A673 (cell line): ENCODE measurements at regions of chr14 and their contacts with region 1.

Region 1: DNA sequence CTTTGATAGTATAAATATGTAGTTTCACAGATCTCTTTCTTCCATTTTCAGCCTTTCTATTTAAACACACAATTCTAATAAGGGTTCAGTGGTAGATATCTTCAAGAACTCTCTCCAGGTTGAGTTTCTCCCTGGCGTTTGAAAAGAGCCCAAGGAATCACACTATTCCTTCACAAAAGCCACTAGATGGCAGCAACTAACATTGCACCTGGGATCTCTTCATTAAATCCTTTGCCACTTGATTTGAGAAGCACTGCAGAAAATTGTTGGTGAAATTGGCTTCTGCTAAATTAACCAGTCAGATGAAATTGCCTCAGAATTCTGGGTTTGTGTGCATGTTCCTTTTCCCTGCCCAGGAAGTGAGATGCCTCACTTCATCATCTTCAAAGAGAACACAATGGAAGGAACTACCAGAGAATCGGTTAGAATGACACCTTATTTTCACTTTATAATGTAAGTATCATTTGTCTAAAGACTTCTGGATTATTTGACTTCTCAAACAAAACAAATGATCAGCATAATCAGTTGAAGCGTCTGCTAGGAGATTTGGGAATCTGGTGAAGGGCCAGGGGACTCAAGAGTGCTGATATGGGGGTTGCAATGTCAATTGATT is 6.8 kb downstream of the CCDC198 start:
- DNase-seq: peak; percentile 82
- H3K4me3 ChIP-seq: no peak overlapping the region
- H3K27ac ChIP-seq: no peak overlapping the region
- H3K4me1 ChIP-seq: peaks cover 14% of the 10 kb centered on the region
- H3K27me3 ChIP-seq: no peaks in the 10 kb centered on the region
- CTCF ChIP-seq: peak; percentile 82

Region 2: GRCh38 chr14:57871459-57872080 is 384.7 kb after region 1 on chr14:
- CTCF ChIA-PET with region 1: interaction called, 3 read pairs
- POLR2A ChIA-PET with region 1: no interaction called
- intact Hi-C with region 1: loop called (anchors 5 kb)
- DNase-seq: peak; percentile 90
- H3K4me3 ChIP-seq: no peak overlapping the region
- H3K27ac ChIP-seq: no peak overlapping the region
- H3K4me1 ChIP-seq: peaks cover 14% of the 10 kb centered on the region
- H3K27me3 ChIP-seq: no peaks in the 10 kb centered on the region
- CTCF ChIP-seq: peak; percentile 91